Transverse colon (tissue), 4 donors: ENCODE measurements at regions of chr12 and their contacts with region 1.

Region 1: GRCh38 chr12:96985480-96986362 is 78.7 kb downstream of the NEDD1 start:
- DNase-seq: peak; percentile 10
- H3K4me3 ChIP-seq: peak overlapping the region; percentile 8 to 50 (median 23)
- H3K27ac ChIP-seq: no peak overlapping the region
- H3K4me1 ChIP-seq: peaks cover 0 to 9% (median 7%) of the 10 kb centered on the region in 4 donors
- H3K27me3 ChIP-seq: peaks cover 28% of the 10 kb centered on the region
- CTCF ChIP-seq: peak in 4 of 5 experiments; percentile 42 to 84 (median 78)
- EP300 ChIP-seq: no peak
- POLR2A ChIP-seq: no peak

Region 2: DNA sequence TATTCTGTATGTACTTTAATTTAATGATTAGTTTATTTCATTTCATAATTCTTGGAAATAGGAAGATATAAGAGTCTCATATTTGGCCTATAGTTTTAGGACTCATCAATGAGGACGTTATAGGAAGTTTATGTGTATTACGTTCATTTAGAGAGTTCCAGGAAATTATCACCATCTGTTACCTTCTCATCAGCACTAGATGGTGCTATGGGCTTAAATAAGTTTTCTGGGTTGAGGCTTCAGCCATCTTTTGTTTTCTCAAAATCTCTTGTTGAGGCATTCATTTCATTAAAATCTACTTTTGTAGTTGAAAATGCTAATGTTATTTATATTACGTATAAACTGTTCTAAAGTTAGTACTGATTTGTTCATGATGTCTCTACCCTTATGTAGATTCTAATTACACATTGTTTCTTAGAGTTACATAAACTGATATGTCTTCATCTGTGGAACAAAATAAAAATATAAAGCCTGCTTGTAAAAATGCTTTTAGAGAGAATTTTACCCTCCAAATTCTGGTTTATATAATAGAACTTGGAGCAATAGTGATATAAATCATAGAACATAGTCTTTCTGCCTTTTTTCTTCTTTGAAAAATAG is 407.1 kb before region 1 on chr12:
- in situ Hi-C with region 1: loop called (anchors 25 kb)
- intact Hi-C with region 1: loop called (anchors 10 kb)
- DNase-seq: no peak
- H3K4me3 ChIP-seq: no peak overlapping the region
- H3K27ac ChIP-seq: no peak overlapping the region
- H3K4me1 ChIP-seq: no peaks in the 10 kb centered on the region
- H3K27me3 ChIP-seq: no peaks in the 10 kb centered on the region
- CTCF ChIP-seq: peak; percentile 41 to 55 (median 48)
- EP300 ChIP-seq: no peak
- POLR2A ChIP-seq: no peak

Region 3: DNA sequence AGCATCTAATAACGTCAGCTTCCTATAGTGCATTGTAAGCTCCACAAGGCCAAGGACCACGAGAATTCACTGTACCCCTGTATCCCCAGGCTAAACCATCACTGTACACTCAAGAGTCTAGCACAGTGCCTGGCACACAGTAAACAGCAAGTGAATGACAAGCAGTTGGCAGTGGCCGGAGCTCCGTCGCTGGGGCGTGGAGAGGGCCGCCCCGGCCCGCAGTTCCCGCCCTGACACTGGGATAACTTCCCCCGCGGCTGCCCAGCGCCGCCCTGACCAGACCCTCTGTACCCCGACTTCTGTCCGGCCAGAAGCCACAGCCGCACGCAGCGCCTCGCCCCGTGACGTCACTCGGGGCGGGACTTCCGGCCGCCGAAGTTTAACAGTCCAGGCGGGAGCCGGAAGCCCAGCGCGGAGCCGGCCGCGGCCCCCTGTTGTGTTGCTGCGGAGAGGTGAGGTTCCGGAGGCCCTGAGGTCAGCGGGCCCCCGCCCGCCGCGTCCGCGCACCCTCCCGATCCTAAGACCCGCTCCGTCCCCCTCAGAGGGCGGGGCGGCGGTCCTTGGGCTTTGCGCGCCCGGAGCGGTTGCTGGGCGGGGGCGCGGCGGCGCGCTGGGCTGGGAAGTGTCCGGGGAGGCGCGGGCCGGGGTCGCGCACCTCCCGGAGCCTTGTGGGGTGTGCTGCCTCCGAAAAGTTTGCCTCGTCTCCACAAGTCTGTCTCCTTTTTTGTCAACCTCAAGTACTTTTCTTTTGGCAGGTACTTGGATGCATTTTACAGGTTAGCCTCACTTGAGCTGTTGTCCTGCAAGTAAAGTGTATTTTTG is 78.7 kb before region 1 on chr12 and contains the start of gene NEDD1:
- in situ Hi-C with region 1: no loop called
- intact Hi-C with region 1: no loop called
- DNase-seq: peak; percentile 89
- H3K4me3 ChIP-seq: peak within 1 kb of the TSS; percentile 80 to 90 (median 86)
- H3K27ac ChIP-seq: peak within 1 kb of the TSS; percentile 87 to 92 (median 90)
- H3K4me1 ChIP-seq: peaks cover 4 to 13% (median 10%) of the 10 kb centered on the region in 4 donors
- H3K27me3 ChIP-seq: no peaks in the 10 kb centered on the region
- CTCF ChIP-seq: no peak
- EP300 ChIP-seq: no peak
- POLR2A ChIP-seq: peak; percentile 74
- total RNA-seq, gene NEDD1: 5.6 to 16.7 (median 8.5) TPM

Region 4: DNA sequence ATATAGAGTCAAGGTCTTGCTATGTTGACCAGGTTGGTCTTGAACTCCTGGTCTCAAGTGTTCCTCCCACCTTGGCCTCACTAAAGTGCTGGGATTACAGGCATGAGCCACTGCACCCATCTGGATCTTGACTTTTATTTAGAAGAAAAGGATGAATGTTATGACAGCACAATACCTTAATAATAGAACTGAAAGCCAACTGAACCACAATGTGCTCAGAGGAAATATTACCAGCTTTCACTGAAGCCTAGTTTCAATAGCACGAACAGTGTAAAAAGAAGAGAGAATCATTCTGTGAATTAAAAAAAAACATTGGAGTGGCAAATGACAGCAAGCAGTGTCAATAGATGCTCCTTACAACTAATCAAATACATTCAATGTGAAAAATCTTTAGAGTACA is 237.7 kb after region 1 on chr12:
- in situ Hi-C with region 1: no loop called
- intact Hi-C with region 1: no loop called
- DNase-seq: no peak
- H3K4me3 ChIP-seq: no peak overlapping the region
- H3K27ac ChIP-seq: no peak overlapping the region
- H3K4me1 ChIP-seq: no peaks in the 10 kb centered on the region
- H3K27me3 ChIP-seq: no peaks in the 10 kb centered on the region
- CTCF ChIP-seq: no peak
- EP300 ChIP-seq: no peak
- POLR2A ChIP-seq: no peak

Region 5: DNA sequence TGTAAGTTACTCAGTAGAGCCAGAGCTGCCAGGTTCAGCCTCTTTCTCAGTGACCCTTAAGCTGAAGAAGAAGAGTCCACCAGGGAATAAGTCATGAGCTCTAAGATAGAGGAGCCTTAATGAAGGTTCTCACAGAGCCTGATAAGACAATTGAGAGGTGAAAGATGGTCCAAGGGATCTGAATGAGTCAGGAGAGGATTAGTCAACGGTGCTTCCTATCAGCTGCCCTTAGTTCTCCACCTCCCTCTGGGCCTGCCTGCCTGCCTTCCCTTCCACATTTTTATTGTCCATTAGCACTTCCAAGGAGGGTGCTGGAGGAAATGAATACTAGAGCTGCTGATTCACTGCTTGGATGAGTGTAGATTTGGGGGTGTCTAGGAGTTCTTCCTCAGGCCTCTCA is 315.2 kb after region 1 on chr12:
- in situ Hi-C with region 1: loop called in 1 of 4 experiments (anchors 25 kb)
- intact Hi-C with region 1: loop called (anchors 5 kb)
- DNase-seq: no peak
- H3K4me3 ChIP-seq: no peak overlapping the region
- H3K27ac ChIP-seq: no peak overlapping the region
- H3K4me1 ChIP-seq: no peaks in the 10 kb centered on the region
- H3K27me3 ChIP-seq: no peaks in the 10 kb centered on the region
- CTCF ChIP-seq: no peak
- EP300 ChIP-seq: no peak
- POLR2A ChIP-seq: no peak

Region 6: GRCh38 chr12:97308576-97309198 is 323.0 kb after region 1 on chr12:
- in situ Hi-C with region 1: loop called in 1 of 4 experiments (anchors 25 kb)
- intact Hi-C with region 1: loop called (anchors 5 kb)
- DNase-seq: no peak
- H3K4me3 ChIP-seq: no peak overlapping the region
- H3K27ac ChIP-seq: no peak overlapping the region
- H3K4me1 ChIP-seq: no peaks in the 10 kb centered on the region
- H3K27me3 ChIP-seq: no peaks in the 10 kb centered on the region
- CTCF ChIP-seq: peak; percentile 45 to 72 (median 60)
- EP300 ChIP-seq: no peak
- POLR2A ChIP-seq: no peak

Region 7: GRCh38 chr12:97452230-97452629 is 466.5 kb after region 1 on chr12:
- in situ Hi-C with region 1: no loop called
- intact Hi-C with region 1: no loop called
- DNase-seq: no peak
- H3K4me3 ChIP-seq: no peak overlapping the region
- H3K27ac ChIP-seq: no peak overlapping the region
- H3K4me1 ChIP-seq: no peaks in the 10 kb centered on the region
- H3K27me3 ChIP-seq: no peaks in the 10 kb centered on the region
- CTCF ChIP-seq: no peak
- EP300 ChIP-seq: no peak
- POLR2A ChIP-seq: no peak

Region 8: GRCh38 chr12:97513918-97514317 is 528.2 kb after region 1 on chr12:
- in situ Hi-C with region 1: no loop called
- intact Hi-C with region 1: no loop called
- DNase-seq: no peak
- H3K4me3 ChIP-seq: no peak overlapping the region
- H3K27ac ChIP-seq: no peak overlapping the region
- H3K4me1 ChIP-seq: no peaks in the 10 kb centered on the region
- H3K27me3 ChIP-seq: no peaks in the 10 kb centered on the region
- CTCF ChIP-seq: no peak
- EP300 ChIP-seq: no peak
- POLR2A ChIP-seq: no peak

Region 9: DNA sequence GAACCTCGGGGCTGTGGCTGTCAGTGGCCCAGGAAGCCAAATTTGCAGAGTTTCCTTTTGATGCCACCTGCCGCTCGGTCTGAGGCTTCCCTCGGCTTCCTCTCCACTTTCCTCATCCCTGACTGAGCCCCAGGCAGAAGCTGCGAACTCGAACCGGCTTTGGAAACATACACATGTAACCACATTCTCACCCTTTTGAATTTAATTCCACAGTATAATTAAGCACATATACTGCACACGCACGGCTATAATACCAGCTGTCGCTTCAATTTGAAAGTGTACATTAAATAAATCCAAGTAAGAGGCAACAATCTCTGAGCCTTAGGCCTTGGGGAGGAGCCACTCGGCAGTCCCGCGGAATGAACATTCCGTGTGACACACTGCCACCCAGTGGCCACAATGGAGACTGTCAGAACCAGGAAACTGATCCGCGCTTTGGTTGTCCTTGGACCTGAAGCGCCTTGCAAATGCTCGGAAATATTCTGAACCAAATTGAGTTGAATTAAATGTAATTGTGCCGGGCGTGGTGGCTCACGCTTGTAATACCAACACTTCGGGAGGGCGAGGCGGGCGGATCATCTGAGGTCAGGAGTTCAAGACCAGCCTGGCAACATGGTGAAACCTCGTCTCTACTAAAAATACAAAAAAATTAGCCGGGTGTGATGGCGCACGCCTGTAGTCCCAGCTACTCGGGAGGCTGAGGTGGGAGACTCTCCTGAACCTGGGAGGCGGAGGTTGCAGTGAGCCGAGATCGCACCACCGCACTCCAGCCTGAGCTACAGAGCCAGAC is 1411.8 kb after region 1 on chr12:
- in situ Hi-C with region 1: loop called in 1 of 4 experiments (anchors 25 kb)
- intact Hi-C with region 1: no loop called
- DNase-seq: peak; percentile 88
- H3K4me3 ChIP-seq: peak overlapping the region in 3 of 4 donors; percentile 24 to 47 (median 25)
- H3K27ac ChIP-seq: no peak overlapping the region
- H3K4me1 ChIP-seq: peaks cover 0 to 8% (median 4%) of the 10 kb centered on the region in 4 donors
- H3K27me3 ChIP-seq: no peaks in the 10 kb centered on the region
- CTCF ChIP-seq: peak; percentile 86 to 91 (median 89)
- EP300 ChIP-seq: no peak
- POLR2A ChIP-seq: no peak